IMR-90 (cell line): ENCODE measurements at regions of chr17 and their contacts with region 1.

Region 1: DNA sequence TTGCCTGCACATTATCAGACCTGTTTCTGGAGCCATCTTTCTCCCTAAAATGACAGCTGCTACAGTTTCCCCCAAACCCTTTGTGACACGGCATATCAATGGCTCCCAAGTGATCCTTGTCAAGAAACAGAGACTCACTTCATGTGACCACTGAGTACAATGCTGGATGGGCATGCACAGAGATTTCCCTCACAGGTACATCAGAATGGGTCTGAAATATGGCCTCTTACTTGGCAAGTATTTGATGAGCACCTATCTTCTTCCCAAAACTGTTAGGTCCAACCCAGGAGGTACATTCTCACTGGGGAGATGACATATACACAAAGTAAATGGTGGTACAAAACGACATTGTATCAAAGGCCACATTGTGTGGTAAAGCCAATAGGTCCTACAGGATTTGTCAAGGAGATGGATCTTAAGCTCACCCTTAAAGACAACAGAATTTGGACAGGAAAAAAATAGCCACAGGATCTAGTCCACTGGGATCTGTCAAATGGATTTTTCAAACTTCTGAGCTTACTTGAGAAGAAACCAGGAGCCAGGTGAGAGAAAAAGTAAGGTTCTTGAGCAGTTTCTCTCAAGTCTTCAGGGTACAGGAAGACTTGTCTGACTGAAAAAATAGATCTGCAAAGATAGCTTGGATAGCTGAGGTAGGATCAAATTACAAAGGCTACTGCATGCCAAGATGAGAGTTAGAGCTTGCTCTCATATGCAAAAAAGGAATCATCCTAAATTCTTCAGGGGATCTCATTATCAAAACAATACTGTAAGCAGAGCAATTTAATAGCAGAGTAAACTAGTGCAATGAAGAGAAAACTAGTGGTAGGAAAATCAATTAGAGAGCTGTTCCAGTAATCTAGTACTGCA is 28.8 kb downstream of the RNF43 start:
- DNase-seq: no peak
- ATAC-seq: no peak
- H3K4me3 ChIP-seq: no peak overlapping the region
- H3K27ac ChIP-seq: no peak overlapping the region
- H3K4me1 ChIP-seq: no peaks in the 10 kb centered on the region
- H3K27me3 ChIP-seq: peaks cover 13% of the 10 kb centered on the region
- CTCF ChIP-seq: no peak
- POLR2A ChIP-seq: no peak
- RAD21 ChIP-seq: no peak

Region 2: DNA sequence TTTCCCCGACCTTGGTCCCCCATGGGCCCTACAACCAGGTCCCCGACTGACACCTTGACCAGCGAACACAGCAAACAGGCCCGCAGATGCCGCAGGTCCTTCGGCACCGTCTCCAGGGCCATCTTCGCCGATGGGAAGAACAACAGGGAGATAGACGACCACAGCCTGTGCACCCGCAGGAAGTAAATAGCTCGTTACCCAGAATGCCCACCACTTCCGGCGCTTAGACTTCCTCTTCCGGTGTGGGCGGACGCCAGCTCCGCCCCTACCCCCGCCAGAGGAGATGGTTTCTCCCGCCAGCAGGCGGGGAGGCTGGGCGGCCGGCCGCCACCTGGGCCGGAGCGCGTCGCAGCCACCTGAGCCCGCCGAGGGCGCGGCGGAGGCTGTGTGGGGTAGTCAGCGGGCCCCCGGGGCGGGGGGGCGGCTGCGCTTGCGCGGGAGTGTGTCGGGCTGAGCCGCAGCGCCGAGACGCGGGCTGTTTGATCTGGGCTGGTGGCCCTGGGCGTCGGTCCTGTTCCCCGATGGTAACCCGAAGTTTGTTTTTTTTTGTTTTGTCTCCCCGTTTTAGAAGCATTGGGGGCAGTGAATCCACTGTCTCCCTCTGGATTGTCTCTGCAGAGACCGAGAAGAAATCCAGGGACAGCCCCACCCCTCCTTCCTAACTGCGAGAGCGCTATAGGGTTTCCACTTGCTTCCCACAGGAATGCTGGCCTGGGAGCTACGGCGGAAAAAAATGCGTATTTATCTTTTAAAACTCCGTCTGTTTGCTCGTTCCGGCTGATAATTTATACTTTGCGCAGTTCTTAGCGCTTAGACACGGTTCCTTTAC is 36.3 kb before region 1 on chr17 and contains the start of gene SUPT4H1:
- CTCF ChIA-PET with region 1: no interaction called
- POLR2A ChIA-PET with region 1: no interaction called
- dilution Hi-C with region 1: no loop called
- in situ Hi-C with region 1: no loop called
- intact Hi-C with region 1: no loop called
- DNase-seq: peak; percentile 92
- ATAC-seq: peak; percentile 87
- H3K4me3 ChIP-seq: peak within 1 kb of the TSS; percentile 94
- H3K27ac ChIP-seq: peak within 1 kb of the TSS; percentile 94
- H3K4me1 ChIP-seq: no peaks in the 10 kb centered on the region
- H3K27me3 ChIP-seq: no peaks in the 10 kb centered on the region
- CTCF ChIP-seq: no peak
- POLR2A ChIP-seq: peak; percentile 89
- RAD21 ChIP-seq: 0 out of 2 replicates have a peak, but pooled peaks have one; percentile 6
- total RNA-seq, gene SUPT4H1: 51.6 and 83.6 TPM in 2 replicates

Region 3: DNA sequence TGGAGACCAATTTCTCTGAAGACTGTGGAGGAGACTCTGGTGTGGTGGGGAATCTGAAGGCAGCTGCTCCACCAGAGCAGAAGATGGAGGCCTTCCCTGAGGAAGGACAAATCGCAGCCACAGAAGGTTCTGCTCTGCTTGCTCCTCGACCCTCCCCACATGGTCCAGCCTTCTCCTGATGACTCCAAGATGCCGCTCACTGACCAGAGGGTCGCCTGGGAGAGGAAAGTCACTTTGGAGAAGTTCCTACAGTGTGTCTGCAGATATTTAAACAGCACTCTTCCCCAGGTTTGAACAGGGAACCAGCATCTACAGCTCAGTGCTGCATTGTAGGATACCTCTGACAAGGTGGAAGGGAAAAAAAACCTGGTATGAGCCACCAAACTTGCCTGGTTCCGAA is 15.5 kb before region 1 on chr17:
- CTCF ChIA-PET with region 1: no interaction called
- POLR2A ChIA-PET with region 1: no interaction called
- dilution Hi-C with region 1: no loop called
- in situ Hi-C with region 1: no loop called
- intact Hi-C with region 1: loop called (anchors 1 kb)
- DNase-seq: no peak
- ATAC-seq: no peak
- H3K4me3 ChIP-seq: no peak overlapping the region
- H3K27ac ChIP-seq: no peak overlapping the region
- H3K4me1 ChIP-seq: no peaks in the 10 kb centered on the region
- H3K27me3 ChIP-seq: peaks cover 14% of the 10 kb centered on the region
- CTCF ChIP-seq: no peak
- POLR2A ChIP-seq: no peak
- RAD21 ChIP-seq: no peak